ENCODE measurements at regions of chr16 and their contacts with region 1.

Region 1: DNA sequence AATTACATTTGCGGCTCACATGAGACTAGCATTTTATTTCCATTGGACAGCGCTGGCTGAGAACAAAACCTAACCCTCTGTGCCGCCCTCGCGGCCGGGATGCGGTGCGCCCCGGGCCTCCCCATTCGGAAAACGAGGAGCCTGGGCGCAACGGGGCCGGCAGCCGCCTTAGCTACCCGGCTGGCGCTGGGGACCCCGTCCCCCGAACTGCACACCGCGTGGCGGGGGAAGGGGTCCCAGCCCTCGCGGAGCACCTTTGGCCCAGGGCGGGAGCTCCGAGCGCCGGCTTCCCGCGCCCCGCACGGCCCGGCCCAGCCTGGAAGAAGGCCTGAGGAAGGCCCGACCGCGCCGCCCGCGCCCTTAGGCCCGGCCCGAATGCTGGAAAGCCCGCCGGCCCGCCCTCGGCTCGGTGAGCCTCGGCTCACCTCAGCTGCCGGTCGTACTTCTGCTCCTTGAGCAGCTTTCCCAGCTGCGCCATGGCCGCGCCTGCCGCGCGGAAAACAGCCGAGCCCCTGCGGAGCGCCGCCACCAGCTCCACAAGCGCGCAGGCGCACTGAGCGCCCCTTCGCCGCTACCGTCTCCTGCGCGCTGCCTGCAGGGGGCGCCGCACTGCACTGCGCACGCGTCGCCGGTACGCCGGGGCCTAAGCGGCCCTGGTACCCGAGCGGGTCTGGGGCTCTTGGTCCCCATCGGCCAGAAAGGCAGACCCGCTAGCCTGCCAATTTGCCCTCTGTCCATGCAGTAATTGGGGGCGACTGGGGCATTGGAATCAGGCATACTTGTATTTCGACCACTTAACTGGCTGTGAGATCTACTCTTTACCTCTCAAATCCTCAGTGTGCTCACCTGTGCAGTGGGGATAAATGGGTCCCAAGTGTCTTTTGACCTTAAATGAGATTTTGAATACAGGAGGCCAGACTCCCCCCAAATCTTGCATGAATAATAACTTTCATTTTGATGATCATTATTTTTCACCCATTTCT is at the start of gene NAE1:
- DNase-seq: peak; percentile 89 to 90 (median 89)
- H3K4me3 ChIP-seq: peak within 1 kb of the TSS; percentile 46 to 82 (median 67)
- H3K4me3 Mint-ChIP-seq: peak within 1 kb of the TSS; percentile 74 to 81
- H3K27ac ChIP-seq: peak within 1 kb of the TSS in 1 of 2 donors; percentile 57
- H3K27ac Mint-ChIP-seq: peak within 1 kb of the TSS in 1 of 7 donors; percentile 2
- H3K4me1 ChIP-seq: peaks cover 13 to 16% of the 10 kb centered on the region in 2 donors
- H3K4me1 Mint-ChIP-seq: peaks cover 15% of the 10 kb centered on the region
- H3K27me3 ChIP-seq: no peaks in the 10 kb centered on the region
- H3K27me3 Mint-ChIP-seq: peaks cover 13 to 18% (median 15%) of the 10 kb centered on the region in 3 donors
- CTCF ChIP-seq: peak; percentile 98
- polyA plus RNA-seq, gene NAE1: 10.8 to 18.6 (median 16.8) TPM

Region 2: DNA sequence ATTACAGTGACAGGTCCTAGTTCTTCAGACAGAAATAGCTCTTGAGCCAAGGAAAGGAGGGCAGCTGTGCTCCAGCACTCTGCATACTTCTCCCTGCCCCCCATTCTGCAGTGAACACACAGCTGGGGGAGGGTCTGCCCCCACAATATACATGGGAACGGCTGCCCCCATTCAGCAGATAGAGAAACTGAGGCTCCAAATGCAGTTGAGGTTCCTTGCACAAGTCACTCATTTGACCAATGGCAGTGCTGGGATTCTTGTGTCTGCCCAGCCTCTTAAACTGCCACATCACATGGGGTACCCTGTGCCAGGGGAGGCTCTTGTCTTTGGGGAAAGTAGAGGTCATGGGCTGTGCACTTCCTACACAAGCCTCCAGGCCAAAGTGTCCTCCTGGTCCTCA is 38.7 kb after region 1 on chr16:
- intact Hi-C with region 1: loop called (anchors 5 kb)
- DNase-seq: no peak
- H3K4me3 ChIP-seq: no peak overlapping the region
- H3K4me3 Mint-ChIP-seq: no peak overlapping the region
- H3K27ac ChIP-seq: no peak overlapping the region
- H3K27ac Mint-ChIP-seq: no peak overlapping the region
- H3K4me1 ChIP-seq: peaks cover 14 to 20% of the 10 kb centered on the region in 2 donors
- H3K4me1 Mint-ChIP-seq: peaks cover 15% of the 10 kb centered on the region
- H3K27me3 ChIP-seq: peaks cover 0 to 23% of the 10 kb centered on the region in 2 donors
- H3K27me3 Mint-ChIP-seq: peaks cover 29 to 55% (median 34%) of the 10 kb centered on the region in 3 donors
- CTCF ChIP-seq: no peak

Region 3: DNA sequence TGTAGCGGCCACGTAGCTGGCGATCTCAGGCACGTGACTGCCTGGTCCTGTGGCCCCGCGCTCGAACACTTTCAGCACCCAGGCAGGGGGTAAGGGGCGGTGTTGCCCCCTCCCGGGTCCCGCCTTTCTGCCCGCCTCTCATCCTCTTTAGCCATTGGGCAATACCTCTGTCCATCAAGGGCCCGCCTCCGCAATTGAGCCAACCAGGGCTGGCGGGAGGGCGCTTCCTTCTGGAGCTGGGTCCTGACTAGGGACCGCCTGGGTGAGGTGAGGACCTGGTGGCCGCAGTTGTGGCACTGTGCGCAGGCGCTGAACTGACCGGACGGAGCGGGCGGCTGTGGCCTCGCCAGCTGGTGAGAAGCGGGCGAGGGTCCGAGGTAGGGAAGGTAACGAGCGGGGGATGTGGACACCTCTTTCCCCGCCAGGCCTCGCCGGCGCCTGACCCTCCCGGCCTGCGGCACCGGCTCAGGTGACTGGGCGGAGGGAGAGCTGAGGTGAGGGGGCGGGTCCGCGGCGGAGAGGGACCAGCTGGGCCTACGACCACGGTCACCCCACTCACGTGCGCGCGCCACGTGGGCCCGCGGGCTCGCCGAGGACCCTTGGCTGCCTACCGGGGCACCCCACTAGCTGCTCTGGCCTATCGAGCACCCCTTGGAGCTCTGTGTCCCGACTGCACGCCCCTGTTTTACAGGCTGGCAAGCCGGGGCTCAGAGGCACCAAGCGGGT is 49.7 kb after region 1 on chr16 and contains the start of gene PDP2:
- intact Hi-C with region 1: no loop called
- DNase-seq: peak; percentile 83 to 90 (median 86)
- H3K4me3 ChIP-seq: peak within 1 kb of the TSS; percentile 54 to 87 (median 56)
- H3K4me3 Mint-ChIP-seq: peak within 1 kb of the TSS; percentile 96 to 99
- H3K27ac ChIP-seq: no peak within 1 kb of the TSS
- H3K27ac Mint-ChIP-seq: peak within 1 kb of the TSS in 5 of 7 donors; percentile 30 to 75 (median 58)
- H3K4me1 ChIP-seq: peaks cover 23 to 29% of the 10 kb centered on the region in 2 donors
- H3K4me1 Mint-ChIP-seq: peaks cover 22% of the 10 kb centered on the region
- H3K27me3 ChIP-seq: peaks cover 8 to 55% of the 10 kb centered on the region in 2 donors
- H3K27me3 Mint-ChIP-seq: peaks cover 50 to 62% (median 55%) of the 10 kb centered on the region in 3 donors
- CTCF ChIP-seq: no peak
- polyA plus RNA-seq, gene PDP2: 1.1 TPM in 1 of 3 donors, not detected in the others